Tibial artery (tissue), 4 donors: ENCODE measurements at regions of chr3 and their contacts with region 1.

Region 1: GRCh38 chr3:33711100-33711499 is 7.0 kb downstream of the CLASP2 start:
- DNase-seq: no peak
- H3K4me3 ChIP-seq: no peak overlapping the region
- H3K27ac ChIP-seq: no peak overlapping the region
- H3K4me1 ChIP-seq: peaks cover 0 to 34% (median 6%) of the 10 kb centered on the region in 4 donors
- H3K27me3 ChIP-seq: no peaks in the 10 kb centered on the region
- CTCF ChIP-seq: no peak

Region 2: DNA sequence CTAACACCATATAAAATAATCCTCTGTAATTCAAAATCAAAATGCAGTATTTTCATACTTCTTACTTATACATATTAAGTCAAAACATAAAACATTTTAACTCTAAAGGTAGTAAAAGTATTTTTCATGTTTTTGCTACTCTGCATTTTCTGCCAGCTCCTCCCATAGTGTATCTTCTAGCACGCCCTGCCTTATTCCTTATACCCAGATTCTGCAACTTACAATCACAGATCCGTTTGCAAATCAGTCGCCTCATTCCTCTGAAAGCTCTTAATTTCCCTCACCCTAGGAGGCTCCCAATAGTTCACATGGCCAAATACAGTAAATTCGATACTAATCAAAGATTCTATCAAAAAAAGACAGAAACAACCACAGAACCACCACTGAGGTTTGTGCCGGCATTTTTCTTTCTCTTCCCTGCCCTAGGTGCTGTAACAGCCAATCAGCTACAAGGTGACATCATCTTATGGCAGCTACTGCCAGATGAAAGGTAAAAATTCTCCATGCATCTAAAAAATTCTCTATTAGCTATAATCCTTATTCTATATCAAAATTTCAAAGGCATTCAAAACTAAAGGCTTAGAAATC is 65.9 kb before region 1 on chr3:
- intact Hi-C with region 1: loop called (anchors 5 kb)
- DNase-seq: no peak
- H3K4me3 ChIP-seq: no peak overlapping the region
- H3K27ac ChIP-seq: no peak overlapping the region
- H3K4me1 ChIP-seq: no peaks in the 10 kb centered on the region
- H3K27me3 ChIP-seq: no peaks in the 10 kb centered on the region
- CTCF ChIP-seq: no peak

Region 3: GRCh38 chr3:33732394-33732793 is 21.3 kb after region 1 on chr3:
- intact Hi-C with region 1: no loop called
- DNase-seq: no peak
- H3K4me3 ChIP-seq: no peak overlapping the region
- H3K27ac ChIP-seq: no peak overlapping the region
- H3K4me1 ChIP-seq: no peaks in the 10 kb centered on the region
- H3K27me3 ChIP-seq: no peaks in the 10 kb centered on the region
- CTCF ChIP-seq: no peak

Region 4: DNA sequence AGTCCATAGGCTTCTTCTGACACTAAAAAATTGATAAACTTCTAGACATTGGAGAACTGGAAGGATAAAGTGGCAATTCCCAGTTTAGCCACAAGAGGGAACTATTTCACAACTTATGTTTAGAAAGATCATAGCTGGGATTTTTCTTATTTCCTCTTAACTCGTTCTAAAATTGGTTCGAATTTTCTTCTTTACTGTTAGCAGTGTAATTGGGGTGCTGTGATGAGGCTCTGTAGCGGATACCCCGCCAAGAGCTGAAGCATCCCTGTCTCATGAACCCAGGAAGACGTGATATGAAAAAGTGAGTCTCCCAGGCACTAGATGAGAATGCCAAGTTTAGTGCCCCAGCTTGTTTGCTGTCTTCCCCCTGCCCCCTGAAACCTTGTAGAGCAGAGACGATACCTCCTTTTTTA is 172.4 kb after region 1 on chr3:
- intact Hi-C with region 1: no loop called
- DNase-seq: no peak
- H3K4me3 ChIP-seq: peak overlapping the region; percentile 7 to 28
- H3K27ac ChIP-seq: no peak overlapping the region
- H3K4me1 ChIP-seq: peaks cover 0 to 9% (median 5%) of the 10 kb centered on the region in 4 donors
- H3K27me3 ChIP-seq: no peaks in the 10 kb centered on the region
- CTCF ChIP-seq: peak; percentile 78 to 85

Region 5: DNA sequence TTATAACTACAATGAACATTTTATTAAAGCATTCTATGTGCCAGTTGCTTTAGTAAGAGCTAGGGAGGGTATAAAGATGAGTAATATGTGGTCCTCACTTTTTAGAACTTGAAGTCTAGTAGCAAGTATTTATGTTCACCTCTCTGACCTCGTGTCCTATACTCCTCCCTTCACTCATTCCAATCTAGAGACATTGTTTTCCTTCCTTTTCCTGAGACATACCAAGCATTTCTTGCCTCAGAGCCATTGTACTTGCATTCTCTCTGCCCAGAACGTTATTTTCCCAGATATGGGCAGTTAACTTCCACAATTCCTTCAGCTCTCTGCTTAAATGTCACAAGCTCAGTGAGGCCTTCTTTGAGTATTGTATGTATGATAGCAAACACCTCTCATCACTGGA is 495.9 kb after region 1 on chr3:
- intact Hi-C with region 1: no loop called
- DNase-seq: no peak
- H3K4me3 ChIP-seq: no peak overlapping the region
- H3K27ac ChIP-seq: peak overlapping the region; percentile 67 to 71
- H3K4me1 ChIP-seq: peaks cover 0 to 60% (median 21%) of the 10 kb centered on the region in 4 donors
- H3K27me3 ChIP-seq: no peaks in the 10 kb centered on the region
- CTCF ChIP-seq: no peak